ENCODE measurements at regions of chr5 and their contacts with region 1.

Region 1: GRCh38 chr5:148443998-148444397 is 60.2 kb downstream of the FBXO38 start:
- DNase-seq: peak; percentile 48 to 78 (median 50)
- ATAC-seq: peak; percentile 97
- H3K4me3 ChIP-seq: no peak overlapping the region
- H3K27ac ChIP-seq: no peak overlapping the region
- H3K4me1 ChIP-seq: no peaks in the 10 kb centered on the region
- H3K27me3 ChIP-seq: no peaks in the 10 kb centered on the region
- CTCF ChIP-seq: peak; percentile 70 to 90 (median 80)
- EP300 ChIP-seq: 0 out of 2 replicates have a peak, but pooled peaks have one; percentile 5
- POLR2A ChIP-seq: no peak
- RAD21 ChIP-seq: peak; percentile 89 to 94

Region 2: DNA sequence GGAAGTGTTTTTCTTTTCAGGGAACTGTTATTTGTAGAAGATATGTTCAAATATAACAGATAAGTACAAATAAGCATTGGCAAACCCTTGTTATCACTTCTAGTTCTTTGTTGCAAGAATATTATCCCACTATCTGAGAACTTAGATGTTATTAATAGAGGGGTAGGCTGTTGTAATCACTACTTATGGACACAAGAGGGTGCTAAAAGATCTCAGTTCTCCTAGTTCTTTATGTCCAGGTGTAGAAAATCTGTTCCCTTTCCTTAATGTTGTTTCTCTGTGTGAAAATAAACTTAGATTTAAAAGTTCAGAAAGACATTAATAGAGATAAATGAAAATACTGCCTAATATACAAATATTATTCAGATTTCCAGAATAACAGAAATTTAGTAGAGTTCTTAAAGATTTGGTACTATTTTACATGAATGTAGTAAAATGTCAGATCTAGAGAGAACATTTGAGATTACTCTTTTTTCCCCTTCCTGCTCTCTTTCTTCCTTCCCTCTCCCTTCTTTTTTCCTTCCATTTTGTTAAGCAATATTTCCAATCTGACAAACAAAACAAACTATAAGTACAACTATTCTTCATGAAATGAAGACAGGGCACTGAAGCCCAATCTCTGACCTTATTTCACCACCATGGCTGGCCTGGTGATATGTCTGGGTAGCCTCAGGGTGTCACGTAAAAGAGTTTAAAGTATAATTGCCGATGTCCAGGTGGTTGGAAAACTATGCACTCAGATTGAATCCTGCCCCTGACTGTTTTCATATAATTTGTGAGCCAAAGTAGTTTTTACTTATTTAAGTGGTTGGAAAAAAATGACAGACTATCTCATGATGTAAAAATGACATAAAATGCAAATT is 494.1 kb before region 1 on chr5:
- CTCF ChIA-PET with region 1: interaction called, 8 read pairs
- POLR2A ChIA-PET with region 1: no interaction called
- in situ Hi-C with region 1: no loop called
- intact Hi-C with region 1: loop called (anchors 5 kb)
- DNase-seq: peak; percentile 25 to 46 (median 42)
- ATAC-seq: peak; percentile 78
- H3K4me3 ChIP-seq: no peak overlapping the region
- H3K27ac ChIP-seq: no peak overlapping the region
- H3K4me1 ChIP-seq: no peaks in the 10 kb centered on the region
- H3K27me3 ChIP-seq: no peaks in the 10 kb centered on the region
- CTCF ChIP-seq: peak in 2 of 3 experiments; percentile 20 to 68; a peak in 4 of 6 replicates
- EP300 ChIP-seq: no peak
- POLR2A ChIP-seq: no peak
- RAD21 ChIP-seq: peak; percentile 78 to 82

Region 3: GRCh38 chr5:148482691-148483462 is 38.9 kb after region 1 on chr5:
- CTCF ChIA-PET with region 1: no interaction called
- POLR2A ChIA-PET with region 1: no interaction called
- in situ Hi-C with region 1: no loop called
- intact Hi-C with region 1: loop called (anchors 2 kb)
- DNase-seq: peak; percentile 69 to 85 (median 75)
- ATAC-seq: peak; percentile 94
- H3K4me3 ChIP-seq: peak overlapping the region; percentile 16
- H3K27ac ChIP-seq: no peak overlapping the region; the same call in 2 of the 3 replicates
- H3K4me1 ChIP-seq: peaks cover 0 to 5% of the 10 kb centered on the region in 2 experiments; a peak in 2 of 5 replicates
- H3K27me3 ChIP-seq: no peaks in the 10 kb centered on the region; a peak in 1 of 5 replicates
- CTCF ChIP-seq: peak; percentile 78 to 94 (median 85)
- EP300 ChIP-seq: no peak
- POLR2A ChIP-seq: no peak
- RAD21 ChIP-seq: peak; percentile 29 to 67; a peak in 3 of 4 replicates

Region 4: GRCh38 chr5:149035372-149035790 is 591.4 kb after region 1 on chr5:
- CTCF ChIA-PET with region 1: no interaction called
- POLR2A ChIA-PET with region 1: no interaction called
- in situ Hi-C with region 1: loop called (anchors 25 kb)
- intact Hi-C with region 1: loop called (anchors 1 kb)
- DNase-seq: peak; percentile 52 to 74 (median 56)
- ATAC-seq: peak; percentile 99
- H3K4me3 ChIP-seq: no peak overlapping the region
- H3K27ac ChIP-seq: no peak overlapping the region
- H3K4me1 ChIP-seq: no peaks in the 10 kb centered on the region; a peak in 1 of 5 replicates
- H3K27me3 ChIP-seq: peaks cover 0 to 16% of the 10 kb centered on the region in 2 experiments; a peak in 3 of 5 replicates
- CTCF ChIP-seq: peak; percentile 84 to 90 (median 90)
- EP300 ChIP-seq: no peak
- POLR2A ChIP-seq: no peak
- RAD21 ChIP-seq: peak; percentile 88 to 89